ENCODE measurements at regions of chr18 and their contacts with region 1.

Region 1: DNA sequence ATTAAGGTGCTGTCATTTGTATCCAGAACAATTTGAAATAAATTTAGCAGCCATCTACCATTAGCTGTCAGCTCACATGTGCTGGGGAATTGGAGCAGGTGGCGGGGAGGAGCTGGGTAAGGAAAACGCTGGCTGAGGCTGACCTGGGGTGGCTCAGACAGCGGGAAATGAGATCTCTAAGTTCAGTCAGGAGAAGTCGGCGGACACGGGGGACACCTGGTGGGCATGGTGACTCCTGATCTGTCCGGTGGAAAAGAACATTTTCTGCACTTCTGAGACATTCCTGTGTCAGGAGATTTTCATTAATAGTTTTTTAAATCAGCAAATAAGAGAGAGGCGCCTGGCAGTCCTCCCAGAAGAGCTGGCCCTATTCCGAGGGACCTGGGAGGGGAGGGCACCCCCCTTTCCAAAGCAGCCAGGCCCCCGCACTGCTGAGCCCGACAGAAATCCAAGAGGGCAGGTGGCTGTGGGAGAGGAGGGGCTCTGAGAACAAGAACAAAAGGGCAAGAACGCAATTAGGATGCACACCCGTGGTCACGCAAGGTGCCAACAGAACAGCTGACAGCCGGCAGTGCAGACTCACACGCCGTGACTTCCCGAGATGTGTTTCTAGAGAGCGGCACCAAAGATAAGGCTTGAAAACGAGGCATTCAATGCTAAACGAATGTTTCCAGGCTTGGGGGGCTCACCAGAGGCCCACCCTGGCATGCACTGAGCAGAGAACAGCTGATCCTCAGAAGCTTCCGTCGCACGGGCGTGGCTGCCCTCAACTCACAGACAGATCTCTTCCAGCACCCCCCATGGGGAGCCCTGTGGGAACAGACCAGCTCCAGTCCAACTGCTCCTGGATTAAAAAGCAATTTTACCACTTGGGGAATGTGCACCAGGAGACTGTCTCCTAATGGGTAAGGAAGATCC is 26.4 kb downstream of the SLC66A2 start:
- DNase-seq: no peak
- H3K4me3 ChIP-seq: no peak overlapping the region
- H3K27ac ChIP-seq: no peak overlapping the region
- H3K4me1 ChIP-seq: no peaks in the 10 kb centered on the region
- H3K27me3 ChIP-seq: no peaks in the 10 kb centered on the region
- CTCF ChIP-seq: no peak

Region 2: DNA sequence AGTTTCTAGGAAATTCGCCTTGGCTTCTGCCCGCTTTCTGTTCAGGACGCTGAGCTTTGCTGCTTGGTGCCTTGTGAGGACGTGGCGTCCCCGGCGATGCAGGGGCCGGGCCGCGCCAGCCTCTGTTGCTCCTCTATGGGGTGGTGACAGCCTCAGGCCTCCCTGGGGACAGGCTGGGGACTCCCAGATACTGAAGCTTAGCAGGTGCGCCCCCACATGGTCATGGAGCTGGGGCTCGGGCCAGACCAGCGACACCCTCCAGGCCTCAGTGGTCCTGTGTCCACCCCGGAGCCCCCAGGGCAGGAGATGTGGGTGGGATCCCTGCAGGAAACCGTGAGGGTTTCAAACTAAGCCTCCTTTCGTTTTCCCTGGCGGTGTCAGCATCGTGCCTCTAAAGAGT is 98.1 kb before region 1 on chr18:
- CTCF ChIA-PET with region 1: no interaction called
- dilution Hi-C with region 1: loop called (anchors 5 kb)
- in situ Hi-C with region 1: no loop called
- intact Hi-C with region 1: no loop called
- DNase-seq: no peak
- H3K4me3 ChIP-seq: no peak overlapping the region
- H3K27ac ChIP-seq: no peak overlapping the region
- H3K4me1 ChIP-seq: no peaks in the 10 kb centered on the region
- H3K27me3 ChIP-seq: no peaks in the 10 kb centered on the region
- CTCF ChIP-seq: no peak

Region 3: DNA sequence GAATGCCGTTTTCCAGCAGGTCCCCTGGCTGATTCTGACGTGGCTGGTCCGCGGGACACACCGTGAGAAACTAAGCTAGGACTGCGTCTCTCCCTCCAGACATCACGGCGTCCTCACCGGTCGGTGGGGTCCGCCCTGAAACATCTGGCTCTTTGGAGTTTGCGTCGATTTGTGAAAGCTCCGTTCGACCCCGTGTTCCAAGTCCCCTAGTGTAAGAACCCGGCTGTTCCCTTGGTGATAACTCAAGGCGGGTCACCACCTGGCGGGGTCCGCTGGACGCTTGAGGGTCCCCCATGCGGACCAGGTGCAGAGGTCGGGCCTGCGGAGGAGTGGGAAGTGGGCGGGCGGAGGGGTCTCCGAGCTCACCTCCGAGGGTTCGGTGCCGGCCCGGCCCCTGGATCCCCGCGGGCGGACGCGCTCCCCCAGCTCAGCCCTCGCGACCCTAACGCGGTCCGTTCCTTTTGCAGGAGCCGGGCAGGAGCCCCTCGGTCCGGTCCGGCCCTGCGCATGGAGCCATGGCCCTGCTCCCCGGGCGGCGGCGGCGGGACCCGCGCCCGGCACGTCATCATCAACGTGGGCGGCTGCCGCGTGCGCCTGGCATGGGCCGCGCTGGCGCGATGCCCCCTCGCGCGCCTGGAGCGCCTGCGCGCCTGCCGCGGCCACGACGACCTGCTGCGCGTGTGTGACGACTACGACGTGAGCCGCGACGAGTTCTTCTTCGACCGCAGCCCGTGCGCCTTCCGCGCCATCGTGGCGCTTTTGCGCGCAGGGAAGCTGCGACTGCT is 61.7 kb before region 1 on chr18:
- CTCF ChIA-PET with region 1: no interaction called
- dilution Hi-C with region 1: loop called (anchors 5 kb)
- in situ Hi-C with region 1: no loop called
- intact Hi-C with region 1: no loop called
- DNase-seq: no peak
- H3K4me3 ChIP-seq: no peak overlapping the region
- H3K27ac ChIP-seq: no peak overlapping the region
- H3K4me1 ChIP-seq: no peaks in the 10 kb centered on the region
- H3K27me3 ChIP-seq: no peaks in the 10 kb centered on the region
- CTCF ChIP-seq: no peak

Region 4: DNA sequence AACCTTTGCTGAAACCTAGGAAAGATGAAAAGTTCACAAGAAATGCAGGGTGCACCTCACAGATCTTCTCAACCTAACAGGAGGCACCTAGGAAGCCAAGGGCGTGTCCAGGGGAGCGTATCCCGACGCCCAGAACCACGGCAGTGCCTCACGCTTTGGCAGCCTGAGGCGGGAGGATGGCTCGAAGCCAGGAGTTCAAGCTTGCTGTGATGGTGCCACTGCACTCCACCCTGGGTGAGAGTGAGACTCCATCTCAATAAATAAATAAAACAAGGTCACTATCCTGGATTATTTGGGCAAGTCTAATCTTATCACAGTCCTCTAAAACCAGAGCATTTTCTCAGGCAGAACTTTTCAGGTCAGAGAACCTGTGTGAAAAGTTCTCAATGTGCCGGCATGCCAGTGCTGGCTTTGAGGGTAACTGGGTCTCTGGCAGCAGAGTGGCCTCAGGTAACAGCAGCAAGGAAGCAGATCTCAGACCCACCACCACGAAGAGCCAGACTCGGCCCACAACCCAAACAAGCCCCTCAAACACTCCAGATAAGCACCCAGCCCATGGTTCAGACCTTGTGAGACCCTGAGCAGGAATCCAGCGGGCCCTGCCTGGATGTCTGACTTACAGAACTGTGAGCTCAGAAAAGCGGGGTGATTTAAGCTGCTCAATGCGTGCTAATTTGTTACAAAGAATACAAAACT is 51.1 kb after region 1 on chr18:
- CTCF ChIA-PET with region 1: no interaction called
- dilution Hi-C with region 1: loop called (anchors 5 kb)
- in situ Hi-C with region 1: no loop called
- intact Hi-C with region 1: no loop called
- DNase-seq: no peak
- H3K4me3 ChIP-seq: no peak overlapping the region
- H3K27ac ChIP-seq: no peak overlapping the region
- H3K4me1 ChIP-seq: no peaks in the 10 kb centered on the region
- H3K27me3 ChIP-seq: no peaks in the 10 kb centered on the region
- CTCF ChIP-seq: no peak

Measured in mammary epithelial cell (primary cell).